PC-3 (cell line): ENCODE measurements at regions of chr2 and their contacts with region 1.

Region 1: GRCh38 chr2:71226965-71227560 is at the start of gene PAIP2B:
- DNase-seq: peak; percentile 99
- ATAC-seq: peak; percentile 89
- H3K4me3 ChIP-seq: peak within 1 kb of the TSS; percentile 86
- H3K27ac ChIP-seq: no peak within 1 kb of the TSS
- H3K4me1 ChIP-seq: peaks cover 10% of the 10 kb centered on the region; the same call in 1 of the 2 replicates
- H3K27me3 ChIP-seq: no peaks in the 10 kb centered on the region
- CTCF ChIP-seq: no peak
- total RNA-seq, gene PAIP2B: 3.8 and 4.0 TPM in 2 replicates

Region 2: GRCh38 chr2:71157124-71157793 is 69.8 kb before region 1 on chr2:
- CTCF ChIA-PET with region 1: no interaction called
- POLR2A ChIA-PET with region 1: no interaction called
- intact Hi-C with region 1: loop called (anchors 1 kb)
- DNase-seq: peak; percentile 67
- ATAC-seq: peak; percentile 74
- H3K4me3 ChIP-seq: peak overlapping the region; percentile 50; the same call in 1 of the 2 replicates
- H3K27ac ChIP-seq: no peak overlapping the region
- H3K4me1 ChIP-seq: peaks cover 12% of the 10 kb centered on the region
- H3K27me3 ChIP-seq: no peaks in the 10 kb centered on the region
- CTCF ChIP-seq: peak; percentile 81

Region 3: GRCh38 chr2:71282495-71282894 is 55.4 kb after region 1 on chr2:
- CTCF ChIA-PET with region 1: no interaction called
- POLR2A ChIA-PET with region 1: no interaction called
- intact Hi-C with region 1: loop called (anchors 1 kb)
- DNase-seq: no peak
- ATAC-seq: peak; percentile 42
- H3K4me3 ChIP-seq: no peak overlapping the region
- H3K27ac ChIP-seq: no peak overlapping the region
- H3K4me1 ChIP-seq: peaks cover 31% of the 10 kb centered on the region
- H3K27me3 ChIP-seq: no peaks in the 10 kb centered on the region
- CTCF ChIP-seq: peak; percentile 36; the same call in 1 of the 2 replicates

Region 4: GRCh38 chr2:71347517-71347916 is 120.5 kb after region 1 on chr2:
- CTCF ChIA-PET with region 1: no interaction called
- POLR2A ChIA-PET with region 1: interaction called, 14 read pairs
- intact Hi-C with region 1: no loop called
- DNase-seq: peak; percentile 40
- ATAC-seq: peak; percentile 31; the same call in 1 of the 2 replicates
- H3K4me3 ChIP-seq: no peak overlapping the region
- H3K27ac ChIP-seq: no peak overlapping the region
- H3K4me1 ChIP-seq: no peaks in the 10 kb centered on the region
- H3K27me3 ChIP-seq: no peaks in the 10 kb centered on the region
- CTCF ChIP-seq: no peak